ENCODE measurements at regions of chr11 and their contacts with region 1.

Region 1: DNA sequence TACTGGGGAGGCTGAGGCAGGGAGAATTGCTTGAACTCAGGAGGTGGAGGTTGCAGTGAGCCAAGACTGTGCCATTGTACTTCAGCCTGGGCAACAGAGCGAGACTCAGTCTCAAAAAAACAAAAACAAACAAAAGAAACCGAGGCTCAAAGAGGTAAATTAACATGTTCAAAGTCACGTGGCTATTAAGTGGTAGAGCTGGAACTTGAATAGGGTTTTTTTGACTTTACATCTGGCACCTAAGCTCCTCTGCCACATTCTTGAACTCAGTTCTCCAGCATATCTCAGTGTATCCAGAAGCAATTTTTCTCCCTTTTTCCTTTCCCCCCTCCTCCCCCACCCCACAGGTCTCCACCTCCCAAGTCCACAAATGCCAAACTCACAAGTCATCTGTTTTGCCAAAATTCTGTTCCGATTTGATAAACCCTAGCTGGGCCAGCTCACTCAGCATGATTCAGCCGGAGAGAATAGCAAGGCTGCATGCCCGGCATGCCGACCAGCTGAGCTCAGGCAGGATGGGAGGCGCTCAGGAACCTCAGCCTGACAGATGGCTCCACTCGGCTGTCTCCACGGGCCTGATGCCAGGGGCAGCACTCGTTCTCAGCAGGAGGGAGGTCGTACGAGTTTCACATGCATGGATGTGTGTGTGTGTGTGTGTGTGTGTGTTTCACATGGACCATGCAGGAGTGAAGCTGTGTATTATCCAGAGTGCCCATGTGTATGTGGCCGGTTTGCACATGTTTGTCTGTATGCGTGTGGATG is 63.2 kb upstream of the RRAS2 start:
- DNase-seq: peak; percentile 98
- H3K4me3 ChIP-seq: no peak overlapping the region
- H3K27ac ChIP-seq: peak overlapping the region; percentile 69
- H3K4me1 ChIP-seq: peaks cover 44% of the 10 kb centered on the region
- H3K27me3 ChIP-seq: no peaks in the 10 kb centered on the region
- CTCF ChIP-seq: no peak
- POLR2A ChIP-seq: peak; percentile 69

Region 2: DNA sequence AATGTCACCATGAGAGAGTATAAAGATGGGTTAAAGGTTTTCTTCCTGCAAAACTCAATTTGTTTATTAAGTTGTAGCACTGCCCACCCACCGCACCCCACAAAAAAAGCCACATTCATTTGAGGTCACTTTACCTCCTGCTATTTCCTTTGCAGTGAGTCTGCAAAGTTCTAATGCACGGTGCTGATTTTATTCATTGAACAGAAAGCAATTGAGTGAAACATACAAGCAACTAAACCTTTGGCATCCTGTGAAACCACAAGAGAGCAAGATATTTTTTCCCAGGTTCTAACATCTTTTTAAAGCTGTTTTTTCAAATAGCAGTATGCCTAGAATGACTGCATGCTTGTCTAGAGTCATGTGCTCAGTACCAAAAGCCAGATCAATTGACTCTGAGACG is 102.2 kb before region 1 on chr11:
- CTCF ChIA-PET with region 1: interaction called, 16 read pairs
- POLR2A ChIA-PET with region 1: no interaction called
- dilution Hi-C with region 1: no loop called
- intact Hi-C with region 1: loop called (anchors 1 kb)
- DNase-seq: no peak
- H3K4me3 ChIP-seq: no peak overlapping the region
- H3K27ac ChIP-seq: no peak overlapping the region
- H3K4me1 ChIP-seq: peaks cover 69% of the 10 kb centered on the region
- H3K27me3 ChIP-seq: no peaks in the 10 kb centered on the region
- CTCF ChIP-seq: no peak
- POLR2A ChIP-seq: no peak

Region 3: DNA sequence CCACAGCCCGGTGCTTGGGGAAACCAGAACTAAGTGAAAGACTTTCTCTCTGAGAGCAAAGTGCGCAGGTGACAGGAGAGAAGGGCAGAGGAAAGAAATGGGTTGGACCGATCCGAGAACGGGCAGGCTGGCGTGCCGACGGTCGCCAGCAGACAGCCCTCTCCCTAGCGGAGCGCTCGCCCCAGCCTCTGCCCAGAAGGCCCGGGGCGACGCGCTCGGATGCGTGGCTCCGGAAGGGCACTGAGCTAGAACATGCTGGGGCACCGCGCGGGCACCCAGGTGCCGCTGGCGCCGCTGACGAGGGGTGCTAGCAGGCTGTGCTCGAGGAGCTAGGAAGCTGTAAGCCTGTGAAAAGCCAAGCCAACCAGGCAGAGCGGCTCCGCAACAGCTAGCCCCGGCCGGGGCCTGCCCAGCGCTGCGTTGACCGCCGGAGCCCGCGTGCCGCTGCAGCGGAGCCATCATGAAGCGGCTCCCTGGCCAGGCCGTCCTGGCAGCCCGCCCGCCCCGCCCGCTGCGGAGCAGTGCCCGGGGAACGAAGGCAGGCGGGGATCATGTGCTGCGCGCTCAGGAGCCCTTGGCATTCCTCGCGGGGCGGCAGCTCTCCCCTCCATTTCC is 41.2 kb before region 1 on chr11:
- CTCF ChIA-PET with region 1: interaction called, 4 read pairs
- POLR2A ChIA-PET with region 1: no interaction called
- dilution Hi-C with region 1: no loop called
- intact Hi-C with region 1: loop called (anchors 2 kb)
- DNase-seq: peak; percentile 73
- H3K4me3 ChIP-seq: peak overlapping the region; percentile 24 to 55 (median 40)
- H3K27ac ChIP-seq: peak overlapping the region; percentile 15
- H3K4me1 ChIP-seq: peaks cover 12% of the 10 kb centered on the region
- H3K27me3 ChIP-seq: no peaks in the 10 kb centered on the region
- CTCF ChIP-seq: no peak
- POLR2A ChIP-seq: peak; percentile 60

Region 4: DNA sequence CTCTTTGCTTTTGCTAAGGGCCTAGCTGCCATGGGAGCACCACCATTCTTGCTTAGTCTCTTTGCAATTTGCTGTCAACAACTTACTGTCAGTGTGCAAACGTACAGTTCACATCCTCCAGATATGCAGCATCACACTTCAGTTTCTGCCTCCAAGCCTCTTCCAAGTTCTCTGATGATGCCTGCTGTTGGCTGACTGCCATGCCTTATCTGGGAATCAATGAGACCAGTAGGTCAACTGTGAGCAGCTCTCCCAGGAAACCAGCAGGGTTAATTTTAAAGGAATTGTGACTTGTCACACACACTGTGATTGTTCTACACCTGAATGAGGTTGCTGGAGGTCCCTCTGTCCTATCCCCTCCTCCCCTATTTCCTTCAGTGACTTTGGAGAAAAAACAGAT is 21.4 kb after region 1 on chr11:
- CTCF ChIA-PET with region 1: interaction called, 7 read pairs
- POLR2A ChIA-PET with region 1: interaction called, 3 read pairs
- dilution Hi-C with region 1: no loop called
- intact Hi-C with region 1: loop called (anchors 1 kb)
- DNase-seq: no peak
- H3K4me3 ChIP-seq: no peak overlapping the region
- H3K27ac ChIP-seq: no peak overlapping the region
- H3K4me1 ChIP-seq: peaks cover 29% of the 10 kb centered on the region
- H3K27me3 ChIP-seq: no peaks in the 10 kb centered on the region
- CTCF ChIP-seq: no peak
- POLR2A ChIP-seq: no peak

Region 5: GRCh38 chr11:14835491-14836105 is 413.4 kb after region 1 on chr11:
- CTCF ChIA-PET with region 1: no interaction called
- POLR2A ChIA-PET with region 1: no interaction called
- dilution Hi-C with region 1: no loop called
- intact Hi-C with region 1: no loop called
- DNase-seq: no peak
- H3K4me3 ChIP-seq: no peak overlapping the region
- H3K27ac ChIP-seq: no peak overlapping the region
- H3K4me1 ChIP-seq: no peaks in the 10 kb centered on the region
- H3K27me3 ChIP-seq: no peaks in the 10 kb centered on the region
- CTCF ChIP-seq: no peak
- POLR2A ChIP-seq: no peak

Measured in endothelial cell of umbilical vein (primary cell).